Endothelial cell of umbilical vein (primary cell): ENCODE measurements at regions of chr20 and their contacts with region 1.

Region 1: DNA sequence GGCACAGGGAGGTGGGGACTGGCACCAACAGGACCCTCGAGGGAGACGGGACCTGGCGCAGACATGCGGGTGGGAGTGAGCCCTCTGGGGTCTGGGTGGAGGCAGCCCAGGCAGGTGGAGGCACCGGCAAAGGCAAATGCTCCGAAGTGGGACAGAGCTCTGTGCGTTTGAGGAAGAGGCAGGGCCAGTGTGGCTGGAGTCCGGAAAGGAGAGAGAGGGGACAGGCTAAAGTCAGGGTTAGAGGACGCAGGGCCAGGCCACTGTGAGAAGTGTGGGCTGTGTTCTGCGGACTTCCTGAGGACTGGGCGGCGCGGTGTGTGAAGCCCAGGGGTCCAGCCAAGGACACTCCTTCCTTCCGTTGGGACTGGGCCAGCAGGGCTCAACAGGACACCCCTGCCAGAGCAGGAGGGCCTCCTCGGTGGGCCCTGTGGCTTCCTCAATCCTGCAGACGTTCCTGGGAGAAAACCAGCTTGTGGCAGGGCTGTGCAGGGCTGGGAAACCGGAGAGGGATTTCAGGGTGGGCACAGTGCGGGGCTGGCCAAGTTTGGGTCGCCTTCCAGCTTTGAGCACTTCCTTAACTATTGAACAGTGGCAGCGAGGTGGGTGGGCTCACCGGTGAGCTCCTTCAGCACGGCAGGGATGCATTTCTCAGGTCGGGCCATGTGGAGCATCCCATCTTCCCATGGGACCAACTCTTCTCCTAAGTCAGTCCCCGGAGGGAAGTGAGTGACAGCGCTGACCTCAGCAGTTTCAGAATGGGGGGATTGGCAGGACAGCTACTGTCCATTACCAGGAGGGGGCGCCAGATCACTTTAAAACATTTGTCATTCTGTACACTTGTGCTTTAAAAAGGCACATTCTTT is 22.5 kb downstream of the MOCS3 start:
- DNase-seq: peak; percentile 58
- H3K4me3 ChIP-seq: no peak overlapping the region
- H3K27ac ChIP-seq: no peak overlapping the region
- H3K4me1 ChIP-seq: no peaks in the 10 kb centered on the region
- H3K27me3 ChIP-seq: peaks cover 2 to 3% of the 10 kb centered on the region in 2 experiments
- CTCF ChIP-seq: peak; percentile 84 to 88
- POLR2A ChIP-seq: no peak

Region 2: DNA sequence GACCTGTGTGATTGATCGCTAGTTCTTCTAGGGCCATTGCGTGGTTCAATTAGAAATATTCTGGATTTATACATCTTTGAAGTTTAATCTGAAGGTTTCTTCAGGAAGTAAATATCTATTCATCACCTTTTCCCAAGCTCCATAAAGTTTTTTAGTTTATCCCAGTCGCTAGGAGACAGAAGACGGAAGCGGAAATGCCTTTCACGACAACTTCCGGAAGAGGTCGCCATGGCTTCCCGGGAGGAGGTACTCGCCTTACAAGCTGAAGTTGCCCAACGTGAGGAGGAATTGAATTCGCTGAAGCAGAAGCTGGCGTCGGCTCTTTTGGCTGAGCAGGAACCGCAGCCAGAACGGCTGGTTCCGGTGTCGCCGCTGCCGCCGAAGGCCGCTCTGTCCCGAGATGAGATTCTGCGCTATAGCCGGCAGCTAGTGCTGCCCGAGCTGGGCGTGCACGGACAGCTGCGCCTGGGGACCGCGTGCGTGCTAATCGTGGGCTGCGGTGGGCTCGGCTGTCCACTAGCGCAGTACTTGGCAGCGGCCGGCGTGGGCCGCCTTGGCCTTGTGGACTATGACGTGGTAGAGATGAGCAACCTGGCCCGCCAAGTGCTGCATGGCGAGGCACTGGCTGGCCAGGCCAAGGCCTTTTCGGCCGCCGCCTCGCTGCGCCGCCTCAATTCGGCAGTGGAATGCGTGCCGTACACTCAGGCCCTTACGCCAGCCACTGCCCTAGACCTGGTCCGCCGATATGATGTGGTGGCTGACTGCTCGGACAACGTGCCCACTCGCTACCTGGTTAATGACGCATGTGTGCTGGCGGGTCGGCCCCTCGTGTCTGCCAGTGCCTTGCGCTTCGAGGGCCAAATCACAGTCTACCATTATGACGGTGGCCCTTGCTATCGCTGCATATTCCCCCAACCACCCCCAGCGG is 22.2 kb before region 1 on chr20 and contains the start of gene MOCS3:
- CTCF ChIA-PET with region 1: interaction called, 11 read pairs
- POLR2A ChIA-PET with region 1: no interaction called
- dilution Hi-C with region 1: no loop called
- intact Hi-C with region 1: no loop called
- DNase-seq: peak; percentile 94
- H3K4me3 ChIP-seq: peak within 1 kb of the TSS; percentile 55 to 94 (median 80)
- H3K27ac ChIP-seq: peak within 1 kb of the TSS; percentile 96
- H3K4me1 ChIP-seq: peaks cover 24% of the 10 kb centered on the region
- H3K27me3 ChIP-seq: no peaks in the 10 kb centered on the region
- CTCF ChIP-seq: no peak
- POLR2A ChIP-seq: no peak
- total RNA-seq, gene MOCS3: 3.6 and 4.2 TPM in 2 replicates

Region 3: GRCh38 chr20:50967586-50967985 is 13.5 kb before region 1 on chr20:
- CTCF ChIA-PET with region 1: interaction called, 10 read pairs
- POLR2A ChIA-PET with region 1: no interaction called
- dilution Hi-C with region 1: no loop called
- intact Hi-C with region 1: no loop called
- DNase-seq: no peak
- H3K4me3 ChIP-seq: no peak overlapping the region
- H3K27ac ChIP-seq: no peak overlapping the region
- H3K4me1 ChIP-seq: no peaks in the 10 kb centered on the region
- H3K27me3 ChIP-seq: peaks cover 7 to 8% of the 10 kb centered on the region in 2 experiments
- CTCF ChIP-seq: no peak
- POLR2A ChIP-seq: no peak

Region 4: GRCh38 chr20:50992733-50993457 is 11.8 kb after region 1 on chr20:
- CTCF ChIA-PET with region 1: interaction called, 22 read pairs
- POLR2A ChIA-PET with region 1: no interaction called
- dilution Hi-C with region 1: no loop called
- intact Hi-C with region 1: no loop called
- DNase-seq: peak; percentile 69
- H3K4me3 ChIP-seq: no peak overlapping the region
- H3K27ac ChIP-seq: no peak overlapping the region
- H3K4me1 ChIP-seq: no peaks in the 10 kb centered on the region
- H3K27me3 ChIP-seq: peaks cover 4 to 6% of the 10 kb centered on the region in 2 experiments
- CTCF ChIP-seq: peak; percentile 59 to 67
- POLR2A ChIP-seq: no peak

Region 5: GRCh38 chr20:51456511-51457509 is 475.7 kb after region 1 on chr20:
- CTCF ChIA-PET with region 1: no interaction called
- POLR2A ChIA-PET with region 1: interaction called, 3 read pairs
- dilution Hi-C with region 1: no loop called
- intact Hi-C with region 1: loop called (anchors 10 kb)
- DNase-seq: peak; percentile 99
- H3K4me3 ChIP-seq: no peak overlapping the region
- H3K27ac ChIP-seq: peak overlapping the region; percentile 71
- H3K4me1 ChIP-seq: peaks cover 15% of the 10 kb centered on the region
- H3K27me3 ChIP-seq: no peaks in the 10 kb centered on the region
- CTCF ChIP-seq: no peak
- POLR2A ChIP-seq: no peak